Prostate gland (tissue), 2 donors: ENCODE measurements at regions of chr15 and their contacts with region 1.

Region 1: GRCh38 chr15:75453703-75454470 is 2.4 kb upstream of the SIN3A start:
- DNase-seq: peak; percentile 99
- H3K4me3 ChIP-seq: peak overlapping the region; percentile 72 to 96
- H3K27ac ChIP-seq: peak overlapping the region; percentile 98 to 100
- H3K4me1 ChIP-seq: peaks cover 16% of the 10 kb centered on the region
- H3K27me3 ChIP-seq: no peaks in the 10 kb centered on the region
- CTCF ChIP-seq: peak in 1 of 4 experiments; percentile 50
- POLR2A ChIP-seq: peak; percentile 87

Region 2: DNA sequence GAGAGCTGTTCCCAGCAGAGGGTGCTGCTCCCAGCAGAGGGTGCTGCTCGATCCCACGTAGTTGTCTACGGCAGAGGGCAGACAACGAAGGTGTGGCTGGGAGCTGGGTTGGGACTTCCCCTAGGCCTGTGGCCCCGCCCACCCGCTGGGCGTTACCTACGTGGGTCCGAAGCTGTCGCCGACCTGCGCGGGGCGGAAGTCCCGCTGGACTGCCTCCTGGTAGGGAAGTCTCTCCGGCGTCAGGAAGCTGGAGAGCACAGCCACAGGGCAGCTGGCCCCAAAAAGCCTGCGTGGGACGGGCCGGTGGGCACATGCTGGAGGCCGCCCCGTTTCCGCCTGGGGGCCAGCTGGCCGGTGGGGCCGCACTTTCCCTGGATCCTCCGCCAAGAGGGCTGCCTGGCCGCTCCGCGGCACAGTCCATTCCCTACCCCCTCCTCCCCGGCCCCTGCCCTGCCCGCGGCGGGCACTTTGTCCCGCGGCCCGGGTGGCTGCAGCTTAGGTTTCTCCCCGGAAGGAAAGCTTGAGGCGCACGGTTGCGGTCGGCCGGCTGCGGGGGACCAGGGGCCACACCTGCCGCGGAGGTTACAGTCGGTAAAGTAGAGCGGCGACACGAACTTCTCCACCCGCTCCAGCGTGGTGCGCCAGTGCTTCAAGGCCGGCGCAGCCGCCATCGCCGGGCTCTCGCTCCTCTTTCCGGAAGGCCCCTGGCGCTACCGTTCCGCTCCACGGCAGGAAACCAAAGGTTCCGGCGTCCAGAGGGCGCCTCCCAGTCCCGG is 85.8 kb before region 1 on chr15 and contains the start of gene MAN2C1:
- intact Hi-C with region 1: loop called (anchors 2 kb)
- DNase-seq: peak; percentile 97
- H3K4me3 ChIP-seq: peak within 1 kb of the TSS; percentile 74 to 83
- H3K27ac ChIP-seq: peak within 1 kb of the TSS; percentile 94 to 95
- H3K4me1 ChIP-seq: peaks cover 4% of the 10 kb centered on the region
- H3K27me3 ChIP-seq: no peaks in the 10 kb centered on the region
- CTCF ChIP-seq: peak; percentile 74 to 93 (median 91)
- POLR2A ChIP-seq: peak; percentile 87
- total RNA-seq, gene MAN2C1: 184 to 238 TPM

Region 3: DNA sequence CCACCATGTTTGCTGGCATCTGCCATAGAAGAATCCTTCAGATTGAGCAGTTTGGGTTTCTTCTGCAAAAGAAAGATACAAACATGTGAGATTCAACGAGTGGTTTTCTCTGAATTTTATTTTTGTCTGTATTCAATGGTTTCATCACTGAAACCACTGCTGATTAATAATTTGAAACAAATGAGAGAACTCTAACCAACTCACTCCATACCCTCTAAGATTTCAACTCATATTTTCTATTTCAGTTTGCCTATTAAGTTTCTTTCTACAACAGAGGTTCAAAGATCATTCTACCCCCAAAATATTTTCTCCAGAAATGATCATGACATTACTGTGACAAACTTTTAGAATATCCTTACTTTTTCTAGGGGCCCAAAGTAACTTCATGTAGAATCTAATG is 46.8 kb before region 1 on chr15:
- intact Hi-C with region 1: no loop called
- DNase-seq: no peak
- H3K4me3 ChIP-seq: no peak overlapping the region
- H3K27ac ChIP-seq: no peak overlapping the region
- H3K4me1 ChIP-seq: no peaks in the 10 kb centered on the region
- H3K27me3 ChIP-seq: no peaks in the 10 kb centered on the region
- CTCF ChIP-seq: no peak
- POLR2A ChIP-seq: no peak

Region 4: DNA sequence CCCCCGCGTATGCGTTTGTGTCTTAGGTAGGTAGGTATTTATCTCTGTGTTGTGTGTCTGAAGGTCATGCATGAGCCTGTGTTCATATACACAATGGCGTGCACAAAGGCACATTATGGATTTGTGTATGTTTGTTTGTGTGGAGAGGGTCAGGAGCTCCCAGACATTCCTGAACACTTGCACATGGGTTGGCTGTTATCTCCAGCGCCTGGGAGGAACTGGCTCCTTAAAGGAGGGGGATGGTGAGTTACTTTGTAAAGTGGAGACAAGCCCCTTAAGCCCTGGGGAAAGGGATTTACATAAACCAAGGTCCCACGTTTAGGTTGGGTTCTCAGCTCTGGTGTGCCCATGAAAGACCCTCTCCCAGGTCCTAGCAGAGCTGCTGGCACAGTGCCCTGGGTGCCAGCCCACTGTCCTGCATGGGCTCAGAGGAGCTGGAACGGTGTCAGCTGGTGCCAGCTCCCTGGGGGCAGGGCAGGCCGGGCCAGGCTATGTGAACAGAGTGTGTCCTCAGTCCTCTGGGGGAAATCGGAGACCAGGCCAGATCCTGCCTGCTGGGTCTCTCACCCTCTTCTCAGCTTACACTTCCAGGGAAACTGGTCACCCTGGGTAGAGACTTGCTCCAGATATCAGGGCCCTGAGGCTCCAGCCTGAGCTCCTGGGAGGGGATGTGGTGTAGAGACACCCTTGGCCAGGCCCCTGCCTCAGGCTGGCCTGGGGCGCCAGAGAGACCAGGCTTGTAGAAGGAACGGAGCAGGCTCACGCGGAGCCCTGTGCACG is 218.9 kb after region 1 on chr15:
- intact Hi-C with region 1: no loop called
- DNase-seq: no peak
- H3K4me3 ChIP-seq: no peak overlapping the region
- H3K27ac ChIP-seq: peak overlapping the region; percentile 51 to 60
- H3K4me1 ChIP-seq: peaks cover 6% of the 10 kb centered on the region
- H3K27me3 ChIP-seq: no peaks in the 10 kb centered on the region
- CTCF ChIP-seq: no peak
- POLR2A ChIP-seq: no peak